ENCODE measurements at regions of chr11 and their contacts with region 1.

Region 1: GRCh38 chr11:64688534-64688982 is 34.4 kb downstream of the NRXN2 start:
- DNase-seq: peak; percentile 94
- ATAC-seq: peak; percentile 95
- H3K4me3 ChIP-seq: peak overlapping the region; percentile 37 to 74 (median 63)
- H3K4me3 Mint-ChIP-seq: peak overlapping the region; percentile 88
- H3K27ac ChIP-seq: peak overlapping the region in 1 of 2 donors; percentile 5
- H3K27ac Mint-ChIP-seq: peak overlapping the region; percentile 88
- H3K4me1 ChIP-seq: peaks cover 14 to 23% of the 10 kb centered on the region in 2 donors
- H3K4me1 Mint-ChIP-seq: peaks cover 20% of the 10 kb centered on the region
- H3K27me3 ChIP-seq: peaks cover 0 to 18% (median 8%) of the 10 kb centered on the region in 4 experiments
- H3K27me3 Mint-ChIP-seq: peaks cover 15% of the 10 kb centered on the region
- CTCF ChIP-seq: peak; percentile 92

Region 2: GRCh38 chr11:64553551-64554201 is 134.9 kb before region 1 on chr11:
- CTCF ChIA-PET with region 1: no interaction called
- POLR2A ChIA-PET with region 1: no interaction called
- intact Hi-C with region 1: loop called (anchors 1 kb)
- DNase-seq: peak; percentile 72
- ATAC-seq: peak; percentile 78
- H3K4me3 ChIP-seq: no peak overlapping the region
- H3K4me3 Mint-ChIP-seq: no peak overlapping the region
- H3K27ac ChIP-seq: no peak overlapping the region
- H3K27ac Mint-ChIP-seq: no peak overlapping the region
- H3K4me1 ChIP-seq: peaks cover 12 to 19% of the 10 kb centered on the region in 2 donors
- H3K4me1 Mint-ChIP-seq: peaks cover 7% of the 10 kb centered on the region
- H3K27me3 ChIP-seq: no peaks in the 10 kb centered on the region
- H3K27me3 Mint-ChIP-seq: peaks cover 7% of the 10 kb centered on the region
- CTCF ChIP-seq: peak; percentile 91

Region 3: DNA sequence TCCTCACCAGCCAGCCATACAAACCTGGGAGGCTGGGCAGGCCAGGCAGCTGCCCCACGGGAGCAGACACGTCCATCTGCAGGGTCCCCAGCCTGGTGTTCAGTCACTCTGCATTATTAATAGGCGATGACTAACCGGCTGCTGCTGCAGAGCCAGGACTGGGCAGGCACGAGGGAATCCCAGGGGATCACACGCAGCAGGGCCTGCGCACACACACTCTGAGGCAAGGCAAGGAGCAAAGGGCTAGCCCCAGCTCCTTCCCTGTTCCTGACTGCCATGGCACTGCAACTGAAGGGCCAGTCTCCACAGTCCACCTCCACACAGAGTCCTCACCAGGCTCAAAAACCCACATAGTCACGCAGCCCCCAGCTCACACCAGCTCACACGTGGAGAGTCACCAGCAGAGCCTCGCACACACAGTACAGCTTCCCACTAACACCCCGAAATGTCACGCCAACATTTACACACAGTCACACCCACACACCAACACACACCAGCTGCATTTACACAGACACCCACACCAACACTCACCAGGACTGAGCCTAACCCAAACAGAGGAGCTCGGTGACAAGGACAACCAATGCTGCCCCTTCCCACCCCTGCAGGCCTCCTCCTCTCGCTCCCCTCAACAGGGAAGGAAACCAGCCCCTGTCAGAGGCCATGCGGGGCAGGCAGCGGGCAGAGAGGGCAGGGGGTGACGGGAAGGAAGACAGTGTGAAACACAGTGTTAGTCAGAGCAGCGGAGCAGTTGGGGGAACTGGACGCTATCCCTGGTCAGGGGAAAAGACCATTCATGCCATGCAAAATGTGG is 12.9 kb before region 1 on chr11:
- CTCF ChIA-PET with region 1: interaction called, 12 read pairs
- POLR2A ChIA-PET with region 1: no interaction called
- intact Hi-C with region 1: no loop called
- DNase-seq: no peak
- ATAC-seq: peak; percentile 77
- H3K4me3 ChIP-seq: no peak overlapping the region
- H3K4me3 Mint-ChIP-seq: peak overlapping the region; percentile 12
- H3K27ac ChIP-seq: no peak overlapping the region
- H3K27ac Mint-ChIP-seq: no peak overlapping the region
- H3K4me1 ChIP-seq: peaks cover 15 to 21% of the 10 kb centered on the region in 2 donors
- H3K4me1 Mint-ChIP-seq: peaks cover 21% of the 10 kb centered on the region
- H3K27me3 ChIP-seq: peaks cover 0 to 29% (median 7%) of the 10 kb centered on the region in 4 experiments
- H3K27me3 Mint-ChIP-seq: peaks cover 57% of the 10 kb centered on the region
- CTCF ChIP-seq: no peak

Region 4: GRCh38 chr11:64710418-64711137 is 22.0 kb after region 1 on chr11:
- CTCF ChIA-PET with region 1: interaction called, 44 read pairs
- POLR2A ChIA-PET with region 1: no interaction called
- intact Hi-C with region 1: no loop called
- DNase-seq: no peak
- ATAC-seq: no peak
- H3K4me3 ChIP-seq: no peak overlapping the region
- H3K4me3 Mint-ChIP-seq: no peak overlapping the region
- H3K27ac ChIP-seq: no peak overlapping the region
- H3K27ac Mint-ChIP-seq: no peak overlapping the region
- H3K4me1 ChIP-seq: peaks cover 17 to 29% of the 10 kb centered on the region in 2 donors
- H3K4me1 Mint-ChIP-seq: peaks cover 26% of the 10 kb centered on the region
- H3K27me3 ChIP-seq: peaks cover 0 to 58% (median 40%) of the 10 kb centered on the region in 4 experiments
- H3K27me3 Mint-ChIP-seq: peaks cover 67% of the 10 kb centered on the region
- CTCF ChIP-seq: no peak

Region 5: DNA sequence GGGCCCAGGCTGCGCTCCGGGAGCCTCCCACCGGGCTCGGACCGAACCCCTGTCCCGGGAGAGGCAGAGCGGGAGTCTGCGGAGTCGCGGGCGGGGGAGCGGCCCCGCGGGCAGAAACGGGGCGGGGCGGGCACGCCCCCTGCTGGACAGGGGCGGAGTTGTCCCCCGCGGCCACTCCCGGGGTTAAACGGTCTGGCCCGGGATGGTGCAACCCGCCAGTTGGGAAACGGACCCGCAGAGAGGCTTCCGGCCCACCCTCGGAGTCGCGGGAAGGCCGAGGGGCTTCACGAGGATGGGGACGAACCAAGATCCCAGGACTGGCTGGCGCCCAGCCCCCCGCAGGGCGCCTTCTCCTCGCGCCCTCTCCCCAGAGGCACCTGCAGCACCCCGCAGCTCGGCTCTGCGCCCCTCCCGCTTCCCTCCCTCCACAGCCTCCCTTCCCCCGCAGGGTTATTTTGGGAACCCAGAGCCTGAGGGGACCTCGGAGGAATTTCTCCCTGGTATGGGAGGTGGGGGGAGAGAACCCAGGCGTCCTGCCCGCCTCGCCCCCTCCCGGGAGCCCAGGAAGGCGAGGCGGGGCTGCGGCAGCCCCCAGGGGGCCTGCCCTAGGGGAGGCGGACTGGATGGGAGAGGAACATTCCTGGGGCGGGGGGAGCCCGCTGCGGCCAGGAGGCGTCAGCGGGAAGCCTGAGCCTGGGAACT is 54.5 kb after region 1 on chr11:
- CTCF ChIA-PET with region 1: interaction called, 47 read pairs
- POLR2A ChIA-PET with region 1: interaction called, 7 read pairs
- intact Hi-C with region 1: loop called (anchors 1 kb)
- DNase-seq: peak; percentile 88
- ATAC-seq: peak; percentile 11
- H3K4me3 ChIP-seq: peak overlapping the region; percentile 48 to 99 (median 86)
- H3K4me3 Mint-ChIP-seq: peak overlapping the region; percentile 97
- H3K27ac ChIP-seq: peak overlapping the region; percentile 84 to 91
- H3K27ac Mint-ChIP-seq: peak overlapping the region; percentile 86
- H3K4me1 ChIP-seq: peaks cover 22 to 33% of the 10 kb centered on the region in 2 donors
- H3K4me1 Mint-ChIP-seq: peaks cover 49% of the 10 kb centered on the region
- H3K27me3 ChIP-seq: no peaks in the 10 kb centered on the region
- H3K27me3 Mint-ChIP-seq: no peaks in the 10 kb centered on the region
- CTCF ChIP-seq: peak; percentile 86

Region 6: DNA sequence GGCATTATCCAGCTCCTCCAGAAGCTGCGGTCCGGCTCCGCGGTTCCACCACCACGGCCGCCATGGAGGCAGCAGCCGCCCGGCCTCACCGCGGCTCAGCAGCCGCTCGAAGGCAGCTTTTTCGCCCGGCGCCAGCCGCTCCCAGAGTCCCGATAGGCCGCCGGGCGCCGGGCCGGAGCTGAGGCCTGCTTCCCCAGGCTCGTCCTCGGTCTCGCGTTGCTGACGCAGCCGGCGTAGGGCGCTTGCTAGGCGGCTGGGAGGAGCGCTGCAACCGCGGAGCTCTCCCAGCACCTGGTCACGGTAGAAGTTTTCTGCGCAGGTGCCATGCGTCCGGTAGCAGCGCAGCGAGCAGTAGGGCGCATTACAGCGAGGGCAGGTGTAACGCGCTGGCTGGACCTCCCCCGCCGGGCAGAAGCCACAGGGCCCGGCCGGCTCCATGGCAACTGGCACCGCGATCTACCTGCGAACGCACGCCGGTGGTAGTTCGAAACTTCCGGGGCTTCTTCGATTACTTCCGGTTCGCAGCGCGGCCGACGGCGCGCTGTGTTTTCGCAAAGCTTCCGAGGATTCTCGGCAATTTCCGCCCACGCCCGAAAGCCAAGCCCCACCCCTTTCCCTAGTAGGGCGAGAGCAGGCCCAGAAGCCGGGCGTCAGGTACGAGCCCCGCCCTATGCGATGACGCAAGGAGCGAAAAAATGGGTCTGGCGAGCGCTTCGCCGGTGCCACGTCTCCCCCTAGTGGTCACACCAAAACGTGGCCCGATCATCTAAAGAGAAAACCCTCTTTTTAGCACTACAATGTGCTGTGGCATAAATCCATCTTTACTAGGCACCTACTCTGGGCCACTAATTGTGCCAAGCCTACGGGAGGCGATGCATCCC is 428.9 kb after region 1 on chr11 and contains the start of gene ZNHIT2:
- CTCF ChIA-PET with region 1: interaction called, 4 read pairs
- POLR2A ChIA-PET with region 1: no interaction called
- intact Hi-C with region 1: loop called (anchors 1 kb)
- DNase-seq: peak; percentile 100
- ATAC-seq: peak; percentile 74
- H3K4me3 ChIP-seq: peak within 1 kb of the TSS; percentile 0 to 80 (median 80)
- H3K4me3 Mint-ChIP-seq: peak within 1 kb of the TSS; percentile 91
- H3K27ac ChIP-seq: peak within 1 kb of the TSS; percentile 69 to 96
- H3K27ac Mint-ChIP-seq: peak within 1 kb of the TSS; percentile 91
- H3K4me1 ChIP-seq: peaks cover 38 to 60% of the 10 kb centered on the region in 2 donors
- H3K4me1 Mint-ChIP-seq: peaks cover 71% of the 10 kb centered on the region
- H3K27me3 ChIP-seq: no peaks in the 10 kb centered on the region
- H3K27me3 Mint-ChIP-seq: no peaks in the 10 kb centered on the region
- CTCF ChIP-seq: peak; percentile 92
- total RNA-seq, gene ZNHIT2: 14.1 and 14.5 TPM in 2 replicates